Activated T-helper 1 cell treated with anti-CD3 and anti-CD28 coated beads, Interleukin-12 subunit alpha, Interleukin-12 subunit beta, Interleukin-2, Interleukin-4 antibody, amounts not matched to agents 30 ng/mL and 10 ng/mL and 1 ng/mL, durations not matched to agents 14 hours and 24 hours and 36 hours (primary cell): ENCODE measurements at regions of chr3 and their contacts with region 1.

Region 1: GRCh38 chr3:197002701-197003454 is 26.7 kb downstream of the MELTF start:
- DNase-seq: peak; percentile 77
- H3K4me3 Mint-ChIP-seq: no peak overlapping the region
- H3K27ac Mint-ChIP-seq: no peak overlapping the region
- H3K4me1 Mint-ChIP-seq: peaks cover 10% of the 10 kb centered on the region
- H3K27me3 Mint-ChIP-seq: peaks cover 4% of the 10 kb centered on the region

Region 2: DNA sequence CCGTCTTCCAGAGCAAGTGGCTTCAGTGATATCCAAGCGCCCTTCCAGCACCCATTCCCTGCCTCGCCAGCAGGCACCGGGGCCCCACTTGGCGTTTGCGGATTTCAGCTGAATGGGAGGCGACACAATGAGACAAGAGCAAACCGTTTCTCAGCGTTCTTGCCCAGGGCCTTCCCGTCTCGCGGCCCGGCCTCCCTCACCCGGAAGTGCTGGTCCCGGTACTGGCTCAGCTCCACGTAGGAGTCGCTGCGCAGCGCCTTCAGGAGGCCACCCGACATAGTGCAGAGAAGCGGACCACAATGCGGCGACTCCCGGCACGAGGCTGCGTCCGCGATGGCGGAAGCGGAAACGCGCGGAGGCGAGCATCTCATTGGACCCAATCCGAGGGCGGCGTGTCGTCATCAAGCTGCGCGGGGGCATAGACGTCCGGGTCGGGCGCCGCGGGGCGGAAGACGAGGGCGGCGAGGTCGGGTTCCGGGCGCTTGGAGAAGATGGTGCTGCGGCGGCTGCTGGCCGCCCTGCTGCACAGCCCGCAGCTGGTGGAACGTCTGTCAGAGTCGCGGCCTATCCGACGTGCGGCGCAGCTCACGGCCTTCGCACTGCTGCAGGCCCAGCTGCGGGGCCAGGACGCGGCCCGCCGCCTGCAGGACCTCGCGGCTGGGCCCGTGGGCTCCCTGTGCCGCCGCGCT is 60.5 kb before region 1 on chr3 and contains the start of gene NCBP2:
- intact Hi-C with region 1: loop called (anchors 1 kb)
- DNase-seq: peak; percentile 100
- H3K4me3 Mint-ChIP-seq: peak within 1 kb of the TSS; percentile 100
- H3K27ac Mint-ChIP-seq: peak within 1 kb of the TSS; percentile 97
- H3K4me1 Mint-ChIP-seq: peaks cover 55% of the 10 kb centered on the region
- H3K27me3 Mint-ChIP-seq: peaks cover 2% of the 10 kb centered on the region
- total RNA-seq, gene NCBP2: 102 and 111 TPM in 2 replicates

Region 3: DNA sequence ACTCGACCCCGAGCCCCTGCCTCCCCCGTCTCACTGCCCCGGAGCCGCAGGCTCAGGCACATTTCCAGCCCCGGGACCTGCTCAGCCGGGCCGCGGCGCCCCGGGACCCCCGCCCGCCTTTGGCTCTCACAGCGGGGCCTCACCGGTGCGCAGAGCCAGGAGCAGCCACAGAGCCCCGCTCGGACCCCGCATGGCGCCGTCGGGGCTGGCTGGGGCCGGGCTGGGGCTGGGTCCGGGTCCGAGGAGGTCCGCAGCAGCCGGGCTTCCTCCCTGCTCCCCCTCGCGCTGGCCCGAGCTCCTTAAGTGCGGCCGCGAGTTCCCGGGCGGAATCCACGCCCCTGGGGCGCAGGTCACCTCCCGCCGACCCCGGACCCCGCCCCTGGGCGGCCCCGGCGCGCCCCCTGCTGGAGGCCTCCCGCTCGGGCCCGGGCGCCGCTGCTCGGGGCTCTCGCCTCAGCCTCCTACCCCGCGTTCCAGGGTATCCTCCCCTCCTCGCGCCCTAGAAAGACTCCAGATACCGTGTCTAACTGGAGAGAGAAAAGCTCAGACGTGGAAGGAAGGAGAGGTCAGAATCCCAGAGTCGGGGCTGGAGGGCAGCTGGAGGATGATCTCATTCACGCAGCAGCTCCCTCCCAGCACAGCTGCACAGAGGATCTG is 26.8 kb after region 1 on chr3 and contains the start of gene MELTF:
- intact Hi-C with region 1: loop called (anchors 1 kb)
- DNase-seq: peak; percentile 71
- H3K4me3 Mint-ChIP-seq: peak within 1 kb of the TSS; percentile 74
- H3K27ac Mint-ChIP-seq: no peak within 1 kb of the TSS
- H3K4me1 Mint-ChIP-seq: no peaks in the 10 kb centered on the region
- H3K27me3 Mint-ChIP-seq: peaks cover 1% of the 10 kb centered on the region
- total RNA-seq, gene MELTF: 3.9 and 6.4 TPM in 2 replicates

Region 4: DNA sequence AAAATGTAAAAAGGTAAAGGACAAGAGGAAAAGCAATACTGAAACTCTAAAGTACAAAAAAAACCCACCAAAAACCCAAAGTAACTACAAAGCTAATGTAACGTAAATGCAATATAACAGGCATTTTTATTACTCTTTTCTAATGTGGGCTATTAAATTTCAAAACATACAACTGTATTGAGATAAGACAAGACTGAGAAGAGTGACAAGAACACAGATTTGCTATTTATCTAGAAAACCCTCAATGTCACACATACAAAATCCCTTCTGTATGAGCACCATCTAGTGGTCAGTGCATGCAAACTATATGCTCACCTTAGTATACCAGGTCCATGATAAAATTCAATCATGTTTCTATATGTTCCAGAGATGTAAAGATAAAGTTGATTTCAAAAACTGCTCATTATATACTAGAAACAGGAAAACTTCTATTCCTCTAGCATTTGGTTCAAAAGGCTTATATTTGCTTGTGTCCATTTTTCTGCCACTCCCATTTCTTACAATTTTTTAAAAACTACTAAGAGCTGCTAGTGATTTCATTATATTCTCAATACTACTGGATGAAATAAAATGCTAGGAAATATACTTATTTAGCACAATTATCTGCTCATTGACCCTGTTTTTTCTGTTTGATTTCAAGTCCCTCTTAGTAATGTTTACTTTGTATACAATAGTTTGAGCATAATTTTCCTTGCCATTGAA is 184.2 kb after region 1 on chr3:
- intact Hi-C with region 1: loop called (anchors 1 kb)
- DNase-seq: peak; percentile 5
- H3K4me3 Mint-ChIP-seq: no peak overlapping the region
- H3K27ac Mint-ChIP-seq: no peak overlapping the region
- H3K4me1 Mint-ChIP-seq: peaks cover 13% of the 10 kb centered on the region
- H3K27me3 Mint-ChIP-seq: no peaks in the 10 kb centered on the region

Region 5: DNA sequence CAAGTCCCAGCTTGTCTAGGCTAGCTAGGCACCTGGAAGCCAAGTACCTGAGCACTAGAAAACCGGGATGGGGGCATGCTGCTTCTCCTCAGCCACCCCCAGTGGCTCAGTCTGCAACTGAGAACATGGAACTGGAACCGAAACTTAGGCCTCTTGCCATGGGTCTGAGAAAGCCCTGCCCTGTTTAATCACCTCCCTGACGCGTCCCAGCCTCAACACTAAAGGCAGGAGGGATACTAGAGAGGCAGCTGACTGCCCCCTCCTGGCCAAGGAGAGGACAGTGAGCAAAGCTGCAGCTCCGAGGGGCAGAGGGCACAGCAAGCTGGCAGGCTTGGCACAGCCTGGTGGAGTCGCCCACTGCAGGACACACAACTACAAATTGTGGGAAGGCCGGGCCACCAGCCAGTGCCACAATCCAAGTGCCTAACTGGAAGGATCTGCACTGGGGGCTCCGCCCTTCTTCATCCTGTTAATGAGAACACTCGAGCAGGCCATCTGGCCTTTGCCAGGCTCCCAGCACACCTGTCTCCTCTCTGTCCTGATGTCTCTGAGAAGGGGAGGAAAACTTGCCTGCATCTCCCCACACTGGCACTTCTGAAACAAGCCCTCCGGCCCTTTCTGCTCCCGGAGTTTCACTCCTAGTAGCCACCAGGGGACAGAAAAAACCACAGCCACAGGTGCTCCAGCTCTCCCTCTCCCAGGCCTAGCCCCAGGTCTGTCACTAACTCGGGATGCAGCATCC is 499.2 kb after region 1 on chr3:
- intact Hi-C with region 1: loop called (anchors 10 kb)
- DNase-seq: peak; percentile 20
- H3K4me3 Mint-ChIP-seq: no peak overlapping the region
- H3K27ac Mint-ChIP-seq: no peak overlapping the region
- H3K4me1 Mint-ChIP-seq: no peaks in the 10 kb centered on the region
- H3K27me3 Mint-ChIP-seq: no peaks in the 10 kb centered on the region

Region 6: GRCh38 chr3:197554562-197555280 is 551.8 kb after region 1 on chr3:
- intact Hi-C with region 1: loop called (anchors 1 kb)
- DNase-seq: peak; percentile 93
- H3K4me3 Mint-ChIP-seq: peak overlapping the region; percentile 93
- H3K27ac Mint-ChIP-seq: peak overlapping the region; percentile 97
- H3K4me1 Mint-ChIP-seq: peaks cover 39% of the 10 kb centered on the region
- H3K27me3 Mint-ChIP-seq: peaks cover 4% of the 10 kb centered on the region

Region 7: GRCh38 chr3:197615430-197615829 is 612.6 kb after region 1 on chr3:
- intact Hi-C with region 1: no loop called
- DNase-seq: no peak
- H3K4me3 Mint-ChIP-seq: no peak overlapping the region
- H3K27ac Mint-ChIP-seq: no peak overlapping the region
- H3K4me1 Mint-ChIP-seq: peaks cover 14% of the 10 kb centered on the region
- H3K27me3 Mint-ChIP-seq: no peaks in the 10 kb centered on the region